Left cardiac atrium (tissue), 4 donors: ENCODE measurements at regions of chr1 and their contacts with region 1.

Region 1: GRCh38 chr1:150464422-150464826 is 22.8 kb upstream of the TARS2 start:
- DNase-seq: peak; percentile 54
- ATAC-seq: peak; percentile 30 to 65

Region 2: GRCh38 chr1:150532868-150533302 is 68.5 kb after region 1 on chr1:
- intact Hi-C with region 1: loop called (anchors 5 to 10 kb)
- DNase-seq: no peak
- ATAC-seq: peak in 1 of 2 donors; percentile 9

Region 3: GRCh38 chr1:150537732-150538684 is 73.6 kb after region 1 on chr1:
- intact Hi-C with region 1: loop called (anchors 5 to 10 kb)
- DNase-seq: peak; percentile 60
- ATAC-seq: peak; percentile 34 to 35

Region 4: DNA sequence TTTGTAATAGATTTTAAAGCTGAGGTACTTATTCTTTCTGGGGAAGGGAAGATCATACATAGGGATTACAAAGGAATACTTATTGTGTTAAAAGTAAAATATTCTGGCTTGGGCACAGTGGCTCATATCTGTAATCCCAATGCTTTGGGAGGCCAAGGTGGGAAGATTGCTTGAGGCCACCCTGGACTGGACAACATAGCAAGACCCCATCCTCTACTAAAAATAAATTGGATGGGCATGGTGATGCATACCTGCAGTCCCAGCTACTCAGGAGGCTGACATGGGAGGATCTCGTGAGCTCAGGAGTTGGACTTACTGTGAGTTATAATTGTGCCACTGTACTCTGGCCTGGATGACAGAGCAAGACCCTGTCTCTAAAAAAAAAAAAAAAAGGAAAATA is 633.7 kb after region 1 on chr1:
- intact Hi-C with region 1: no loop called
- DNase-seq: no peak
- ATAC-seq: no peak